ENCODE measurements at regions of chr5 and their contacts with region 1.

Region 1: GRCh38 chr5:91383027-91383955 is at the start of gene ARRDC3:
- DNase-seq: peak; percentile 94 to 99 (median 97)
- ATAC-seq: peak; percentile 30
- H3K4me3 ChIP-seq: peak within 1 kb of the TSS; percentile 73 to 99
- H3K4me3 Mint-ChIP-seq: peak within 1 kb of the TSS; percentile 98
- H3K27ac ChIP-seq: peak within 1 kb of the TSS; percentile 96 to 100
- H3K27ac Mint-ChIP-seq: peak within 1 kb of the TSS; percentile 100
- H3K4me1 ChIP-seq: peaks cover 17% of the 10 kb centered on the region
- H3K4me1 Mint-ChIP-seq: peaks cover 26% of the 10 kb centered on the region
- H3K27me3 ChIP-seq: no peaks in the 10 kb centered on the region
- H3K27me3 Mint-ChIP-seq: no peaks in the 10 kb centered on the region
- CTCF ChIP-seq: no peak
- total RNA-seq, gene ARRDC3: 131 to 132 TPM

Region 2: DNA sequence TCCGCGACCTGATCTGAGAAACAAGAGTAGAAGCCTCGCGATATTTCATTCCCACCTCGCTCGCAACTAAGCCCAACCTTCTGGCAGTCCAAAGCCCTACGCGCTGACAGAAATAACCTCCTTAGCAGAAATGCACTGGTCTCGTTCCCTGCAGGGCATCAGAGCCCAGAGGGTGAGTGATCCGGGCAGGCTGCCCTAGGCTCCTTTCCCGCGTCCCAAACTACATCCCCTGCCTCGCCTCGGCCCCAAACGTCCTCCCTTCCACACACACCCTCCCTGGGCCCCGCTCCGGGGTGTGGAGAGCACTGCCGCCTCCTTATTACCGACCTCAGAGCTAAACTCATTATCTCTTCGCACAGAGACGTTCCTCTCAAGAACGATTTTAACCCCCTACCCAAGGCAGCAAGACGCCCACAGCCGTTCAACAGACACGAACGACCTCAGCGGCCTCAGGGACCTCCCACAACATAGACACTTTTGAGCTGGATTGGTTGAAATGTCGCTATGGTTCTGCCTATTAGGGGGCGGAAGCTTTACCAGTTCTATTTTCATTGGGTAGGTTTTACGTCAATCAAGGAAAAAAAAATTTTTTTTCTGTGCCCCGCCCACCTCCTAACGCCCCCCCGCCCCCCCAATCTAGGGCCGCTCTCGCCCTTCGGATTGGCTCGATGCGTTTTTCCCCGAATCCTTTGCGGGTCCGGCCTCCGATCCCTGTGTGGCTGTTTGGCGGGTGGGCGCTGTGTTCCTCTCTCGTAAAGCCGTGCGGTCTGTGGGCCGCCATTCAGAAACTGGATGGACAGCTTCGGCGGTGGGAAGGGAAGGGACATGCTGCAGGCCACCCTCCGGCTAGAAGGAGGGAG is 973.7 kb before region 1 on chr5 and contains the start of gene CETN3:
- CTCF ChIA-PET with region 1: no interaction called
- POLR2A ChIA-PET with region 1: interaction called, 16 read pairs
- intact Hi-C with region 1: loop called (anchors 1 to 2 kb)
- DNase-seq: peak; percentile 81 to 96 (median 89)
- ATAC-seq: peak; percentile 90
- H3K4me3 ChIP-seq: peak within 1 kb of the TSS; percentile 91 to 99
- H3K4me3 Mint-ChIP-seq: no peak within 1 kb of the TSS
- H3K27ac ChIP-seq: peak within 1 kb of the TSS; percentile 93 to 95
- H3K27ac Mint-ChIP-seq: no peak within 1 kb of the TSS
- H3K4me1 ChIP-seq: peaks cover 7% of the 10 kb centered on the region
- H3K4me1 Mint-ChIP-seq: peaks cover 24% of the 10 kb centered on the region
- H3K27me3 ChIP-seq: no peaks in the 10 kb centered on the region
- H3K27me3 Mint-ChIP-seq: no peaks in the 10 kb centered on the region
- CTCF ChIP-seq: no peak
- total RNA-seq, gene CETN3: 2.4 to 3.4 TPM

Region 3: DNA sequence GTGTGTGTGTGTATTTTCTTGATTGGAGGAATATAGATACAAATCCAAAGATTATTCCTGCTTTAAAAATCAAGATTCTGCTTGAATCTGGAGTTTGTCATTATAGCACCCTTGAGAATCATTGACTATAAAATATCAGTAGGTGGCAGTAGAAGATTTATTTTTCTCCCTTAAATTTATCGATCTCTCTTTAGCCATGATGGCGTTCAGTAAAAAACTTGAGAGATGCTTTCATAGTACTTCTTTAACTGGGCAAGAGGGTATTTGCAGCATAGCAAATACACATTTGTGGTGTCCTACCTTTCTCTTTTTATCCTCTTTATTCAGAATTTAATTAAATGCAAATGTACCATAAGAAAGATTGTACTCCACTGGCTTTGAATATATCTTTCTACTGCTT is 517.0 kb before region 1 on chr5:
- CTCF ChIA-PET with region 1: interaction called, 55 read pairs
- POLR2A ChIA-PET with region 1: interaction called, 5 read pairs
- intact Hi-C with region 1: loop called (anchors 1 to 10 kb)
- DNase-seq: peak in 2 of 9 experiments; percentile 39 to 52
- ATAC-seq: no peak
- H3K4me3 ChIP-seq: no peak overlapping the region
- H3K4me3 Mint-ChIP-seq: no peak overlapping the region
- H3K27ac ChIP-seq: no peak overlapping the region
- H3K27ac Mint-ChIP-seq: no peak overlapping the region
- H3K4me1 ChIP-seq: peaks cover 4% of the 10 kb centered on the region
- H3K4me1 Mint-ChIP-seq: peaks cover 11% of the 10 kb centered on the region
- H3K27me3 ChIP-seq: no peaks in the 10 kb centered on the region
- H3K27me3 Mint-ChIP-seq: peaks cover 2% of the 10 kb centered on the region
- CTCF ChIP-seq: peak; percentile 49

Region 4: DNA sequence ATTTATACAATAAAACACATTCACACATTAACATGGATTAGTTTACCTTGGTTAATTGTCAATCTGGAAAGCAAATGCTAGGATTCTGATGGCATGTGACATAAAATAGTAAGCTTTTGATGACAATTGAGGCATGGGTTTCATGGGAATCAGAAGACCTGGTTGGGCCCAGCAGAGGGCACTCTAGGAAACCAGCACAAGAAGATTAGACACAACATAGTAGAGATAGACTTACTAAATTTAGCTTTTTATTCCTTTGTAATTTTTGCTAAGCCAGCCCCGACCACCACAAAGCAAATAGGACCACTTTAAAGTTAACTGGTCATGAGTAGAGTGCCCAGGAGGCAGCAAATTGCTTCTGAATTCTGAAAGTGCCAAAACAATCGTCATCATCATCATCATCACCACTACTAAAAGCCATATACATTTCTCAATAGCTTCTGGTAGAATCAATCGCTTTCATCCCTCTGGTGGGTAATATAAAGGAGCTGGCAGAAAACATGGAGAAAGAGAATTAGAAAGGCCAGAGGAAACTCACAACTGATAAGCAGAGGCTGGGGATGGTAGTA is 163.4 kb before region 1 on chr5:
- CTCF ChIA-PET with region 1: interaction called, 219 read pairs
- POLR2A ChIA-PET with region 1: interaction called, 30 read pairs
- intact Hi-C with region 1: no loop called
- DNase-seq: peak in 6 of 9 experiments; percentile 5 to 58 (median 23)
- ATAC-seq: no peak
- H3K4me3 ChIP-seq: no peak overlapping the region
- H3K4me3 Mint-ChIP-seq: no peak overlapping the region
- H3K27ac ChIP-seq: no peak overlapping the region
- H3K27ac Mint-ChIP-seq: no peak overlapping the region
- H3K4me1 ChIP-seq: no peaks in the 10 kb centered on the region
- H3K4me1 Mint-ChIP-seq: no peaks in the 10 kb centered on the region
- H3K27me3 ChIP-seq: no peaks in the 10 kb centered on the region
- H3K27me3 Mint-ChIP-seq: no peaks in the 10 kb centered on the region
- CTCF ChIP-seq: no peak

Region 5: DNA sequence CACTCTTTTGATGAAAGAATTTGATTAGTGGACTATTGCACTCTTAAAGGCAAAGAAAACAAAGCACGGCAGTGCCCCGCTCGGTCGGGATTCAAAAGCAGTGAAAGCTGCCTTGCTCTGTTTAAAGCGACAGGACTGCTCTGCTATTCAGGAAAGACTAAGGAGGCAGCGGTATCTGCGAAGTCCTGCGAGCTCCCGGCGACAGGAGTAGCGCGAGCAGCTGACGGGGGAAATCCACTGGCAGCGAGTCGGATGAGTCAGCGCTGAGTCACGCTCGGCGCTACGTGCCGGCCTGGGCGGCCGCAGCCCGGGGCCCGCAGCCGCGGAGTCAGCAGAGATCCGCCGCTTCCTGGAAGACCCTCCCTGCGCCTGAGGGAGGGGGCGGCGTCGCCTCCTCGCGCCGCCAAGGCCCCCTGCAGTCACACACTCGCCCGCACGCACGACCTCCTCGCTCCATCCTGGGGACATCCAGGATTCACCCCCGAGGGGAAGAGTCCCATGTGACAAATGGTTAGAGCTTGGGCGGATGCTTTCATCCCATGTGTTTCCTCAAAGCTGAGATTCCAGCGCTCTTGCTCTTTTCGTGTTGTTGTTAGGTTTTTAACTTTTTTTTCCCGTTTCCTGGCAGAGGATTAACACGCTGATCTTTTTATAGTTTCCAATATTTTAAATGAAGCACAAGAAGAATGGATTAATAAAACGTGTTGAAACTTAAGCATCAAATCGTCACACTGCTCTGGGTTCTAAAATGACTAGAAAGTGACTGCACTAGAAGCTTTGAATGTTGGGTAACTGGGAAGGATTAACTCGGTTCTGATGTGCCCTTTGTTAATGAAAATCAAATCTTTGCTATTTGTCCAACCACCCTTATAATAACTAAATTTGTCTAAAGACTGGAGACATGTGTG is 102.7 kb before region 1 on chr5:
- CTCF ChIA-PET with region 1: interaction called, 35 read pairs
- POLR2A ChIA-PET with region 1: interaction called, 35 read pairs
- intact Hi-C with region 1: loop called in 1 of 2 experiments (anchors 1 kb)
- DNase-seq: peak; percentile 53 to 95 (median 85)
- ATAC-seq: peak; percentile 84
- H3K4me3 ChIP-seq: peak overlapping the region; percentile 58 to 79
- H3K4me3 Mint-ChIP-seq: peak overlapping the region; percentile 84
- H3K27ac ChIP-seq: peak overlapping the region; percentile 16 to 28
- H3K27ac Mint-ChIP-seq: peak overlapping the region; percentile 84
- H3K4me1 ChIP-seq: peaks cover 8% of the 10 kb centered on the region
- H3K4me1 Mint-ChIP-seq: peaks cover 26% of the 10 kb centered on the region
- H3K27me3 ChIP-seq: no peaks in the 10 kb centered on the region
- H3K27me3 Mint-ChIP-seq: no peaks in the 10 kb centered on the region
- CTCF ChIP-seq: no peak

Region 6: GRCh38 chr5:91397791-91398190 is 14.5 kb after region 1 on chr5:
- CTCF ChIA-PET with region 1: interaction called, 28 read pairs
- POLR2A ChIA-PET with region 1: interaction called, 4 read pairs
- intact Hi-C with region 1: no loop called
- DNase-seq: no peak
- ATAC-seq: no peak
- H3K4me3 ChIP-seq: no peak overlapping the region
- H3K4me3 Mint-ChIP-seq: no peak overlapping the region
- H3K27ac ChIP-seq: no peak overlapping the region
- H3K27ac Mint-ChIP-seq: no peak overlapping the region
- H3K4me1 ChIP-seq: no peaks in the 10 kb centered on the region
- H3K4me1 Mint-ChIP-seq: no peaks in the 10 kb centered on the region
- H3K27me3 ChIP-seq: no peaks in the 10 kb centered on the region
- H3K27me3 Mint-ChIP-seq: no peaks in the 10 kb centered on the region
- CTCF ChIP-seq: no peak

Measured in CD8-positive, alpha-beta T cell (primary cell).